IMR-90 (cell line): ENCODE measurements at regions of chr6 and their contacts with region 1.

Region 1: GRCh38 chr6:138517635-138518034 is 18.3 kb upstream of the NHSL1 start:
- DNase-seq: peak; percentile 43
- ATAC-seq: peak; percentile 76
- H3K4me3 ChIP-seq: no peak overlapping the region
- H3K27ac ChIP-seq: no peak overlapping the region
- H3K4me1 ChIP-seq: no peaks in the 10 kb centered on the region
- H3K27me3 ChIP-seq: no peaks in the 10 kb centered on the region
- CTCF ChIP-seq: peak; percentile 55
- POLR2A ChIP-seq: no peak
- RAD21 ChIP-seq: peak; percentile 53

Region 2: GRCh38 chr6:138477913-138478539 is 39.6 kb before region 1 on chr6:
- CTCF ChIA-PET with region 1: no interaction called
- POLR2A ChIA-PET with region 1: no interaction called
- dilution Hi-C with region 1: no loop called
- in situ Hi-C with region 1: no loop called
- intact Hi-C with region 1: no loop called
- DNase-seq: no peak
- ATAC-seq: no peak
- H3K4me3 ChIP-seq: no peak overlapping the region
- H3K27ac ChIP-seq: no peak overlapping the region
- H3K4me1 ChIP-seq: no peaks in the 10 kb centered on the region
- H3K27me3 ChIP-seq: no peaks in the 10 kb centered on the region
- CTCF ChIP-seq: no peak
- POLR2A ChIP-seq: no peak
- RAD21 ChIP-seq: no peak

Region 3: DNA sequence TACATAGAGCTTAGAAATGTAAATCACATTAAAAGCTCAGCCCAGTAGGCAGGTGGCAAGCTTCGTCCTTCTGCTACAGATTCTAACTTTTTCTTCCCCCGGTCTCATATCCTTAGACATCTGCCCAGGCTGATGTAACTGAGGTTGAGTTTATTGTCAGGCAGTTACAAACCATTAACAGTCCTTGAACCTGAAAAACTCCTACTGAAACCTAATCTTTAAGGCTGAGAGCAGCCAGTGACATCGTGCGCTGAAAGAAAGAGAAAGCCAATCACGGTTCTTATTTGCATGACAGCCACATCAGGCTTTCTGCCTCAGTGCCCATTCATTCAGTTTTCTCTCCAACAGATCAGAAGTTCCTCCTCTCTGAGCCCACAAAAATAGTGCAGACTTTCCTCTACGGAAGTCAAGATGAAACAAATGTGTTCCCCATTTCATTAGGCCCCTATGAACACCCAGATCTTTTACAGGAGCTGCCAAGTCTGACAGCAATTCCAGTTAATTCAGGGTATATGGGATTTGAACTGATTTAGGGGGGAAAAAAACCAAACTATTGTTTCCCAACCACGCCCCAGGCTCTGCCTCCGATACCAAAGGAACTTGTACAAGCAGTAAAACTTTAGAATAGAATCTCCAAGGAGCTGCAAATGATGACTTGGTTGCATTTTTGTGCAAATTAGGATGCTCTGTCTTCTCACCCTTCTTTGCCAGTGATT is 18.2 kb before region 1 on chr6 and contains the start of gene NHSL1:
- CTCF ChIA-PET with region 1: no interaction called
- POLR2A ChIA-PET with region 1: no interaction called
- dilution Hi-C with region 1: no loop called
- in situ Hi-C with region 1: no loop called
- intact Hi-C with region 1: no loop called
- DNase-seq: peak; percentile 26
- ATAC-seq: peak; percentile 54
- H3K4me3 ChIP-seq: no peak within 1 kb of the TSS
- H3K27ac ChIP-seq: no peak within 1 kb of the TSS
- H3K4me1 ChIP-seq: peaks cover 5% of the 10 kb centered on the region; the same call in 1 of the 2 replicates
- H3K27me3 ChIP-seq: no peaks in the 10 kb centered on the region
- CTCF ChIP-seq: no peak
- POLR2A ChIP-seq: no peak
- RAD21 ChIP-seq: no peak
- total RNA-seq, gene NHSL1: 6.9 and 7.2 TPM in 2 replicates

Region 4: GRCh38 chr6:138555421-138555988 is 37.9 kb after region 1 on chr6:
- CTCF ChIA-PET with region 1: no interaction called
- POLR2A ChIA-PET with region 1: no interaction called
- dilution Hi-C with region 1: no loop called
- in situ Hi-C with region 1: no loop called
- intact Hi-C with region 1: loop called (anchors 1 kb)
- DNase-seq: no peak
- ATAC-seq: peak; percentile 75
- H3K4me3 ChIP-seq: no peak overlapping the region
- H3K27ac ChIP-seq: peak overlapping the region; percentile 65; the same call in 1 of the 2 replicates
- H3K4me1 ChIP-seq: peaks cover 7% of the 10 kb centered on the region
- H3K27me3 ChIP-seq: no peaks in the 10 kb centered on the region
- CTCF ChIP-seq: no peak
- POLR2A ChIP-seq: no peak
- RAD21 ChIP-seq: no peak

Region 5: GRCh38 chr6:138833816-138834539 is 316.3 kb after region 1 on chr6:
- CTCF ChIA-PET with region 1: no interaction called
- POLR2A ChIA-PET with region 1: no interaction called
- dilution Hi-C with region 1: no loop called
- in situ Hi-C with region 1: no loop called
- intact Hi-C with region 1: no loop called
- DNase-seq: no peak
- ATAC-seq: no peak
- H3K4me3 ChIP-seq: no peak overlapping the region
- H3K27ac ChIP-seq: no peak overlapping the region
- H3K4me1 ChIP-seq: no peaks in the 10 kb centered on the region
- H3K27me3 ChIP-seq: no peaks in the 10 kb centered on the region
- CTCF ChIP-seq: no peak
- POLR2A ChIP-seq: no peak
- RAD21 ChIP-seq: no peak